CD8-positive, alpha-beta memory T cell (primary cell): ENCODE measurements at regions of chr1 and their contacts with region 1.

Region 1: GRCh38 chr1:109112652-109113285 is 1.1 kb upstream of the ELAPOR1 start:
- DNase-seq: peak; percentile 84 to 94 (median 87)
- H3K4me3 ChIP-seq: peak overlapping the region; percentile 73
- H3K4me3 Mint-ChIP-seq: peak overlapping the region; percentile 87 to 94 (median 89)
- H3K27ac ChIP-seq: peak overlapping the region; percentile 49
- H3K27ac Mint-ChIP-seq: peak overlapping the region; percentile 75 to 99 (median 96)
- H3K4me1 ChIP-seq: peaks cover 27% of the 10 kb centered on the region
- H3K4me1 Mint-ChIP-seq: peaks cover 22 to 30% (median 29%) of the 10 kb centered on the region in 3 donors
- H3K27me3 ChIP-seq: no peaks in the 10 kb centered on the region
- H3K27me3 Mint-ChIP-seq: peaks cover 3 to 13% of the 10 kb centered on the region in 2 donors

Region 2: GRCh38 chr1:108828022-108828961 is 284.5 kb before region 1 on chr1:
- CTCF ChIA-PET with region 1: interaction called, 18 read pairs
- POLR2A ChIA-PET with region 1: no interaction called
- DNase-seq: peak; percentile 48 to 79 (median 63)
- H3K4me3 ChIP-seq: no peak overlapping the region
- H3K4me3 Mint-ChIP-seq: no peak overlapping the region
- H3K27ac ChIP-seq: no peak overlapping the region
- H3K27ac Mint-ChIP-seq: peak overlapping the region in 2 of 8 donors; percentile 12 to 46
- H3K4me1 ChIP-seq: no peaks in the 10 kb centered on the region
- H3K4me1 Mint-ChIP-seq: peaks cover 0 to 5% (median 4%) of the 10 kb centered on the region in 3 donors
- H3K27me3 ChIP-seq: no peaks in the 10 kb centered on the region
- H3K27me3 Mint-ChIP-seq: no peaks in the 10 kb centered on the region

Region 3: DNA sequence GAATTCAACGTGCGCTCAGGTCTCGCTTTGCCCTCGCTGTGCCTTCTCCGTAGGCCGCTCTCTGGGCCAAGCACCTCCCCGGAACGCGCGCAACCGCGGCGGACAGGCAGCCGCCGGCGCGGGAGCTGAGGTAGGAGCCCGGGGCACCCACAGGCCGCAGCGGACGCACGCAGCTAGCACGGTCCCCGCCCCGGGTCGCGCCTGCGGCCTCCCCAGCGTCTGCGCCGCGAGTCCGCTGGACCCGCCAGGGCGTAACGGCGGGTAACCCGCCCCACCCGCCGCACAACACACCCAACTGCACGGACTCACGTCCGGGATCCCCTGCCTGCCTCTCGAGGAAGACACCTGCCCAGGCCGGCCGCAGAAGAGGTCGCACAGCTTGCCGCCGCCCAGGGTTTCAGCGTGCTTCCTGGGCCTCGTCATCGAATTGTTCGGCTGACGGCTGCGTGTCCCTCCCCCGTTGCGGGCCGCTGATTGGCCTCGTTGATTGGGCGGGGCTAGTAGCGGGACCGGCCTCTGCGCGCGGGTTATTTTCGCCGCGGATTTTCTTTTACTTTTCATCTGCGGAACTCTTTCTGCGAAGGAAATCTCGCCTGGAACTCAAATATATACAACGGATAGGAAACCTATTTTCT is 149.6 kb before region 1 on chr1 and contains the start of gene CLCC1:
- CTCF ChIA-PET with region 1: interaction called, 10 read pairs
- POLR2A ChIA-PET with region 1: interaction called, 7 read pairs
- DNase-seq: peak; percentile 89 to 95 (median 92)
- H3K4me3 ChIP-seq: peak within 1 kb of the TSS; percentile 69
- H3K4me3 Mint-ChIP-seq: peak within 1 kb of the TSS; percentile 86 to 95 (median 89)
- H3K27ac ChIP-seq: peak within 1 kb of the TSS; percentile 89
- H3K27ac Mint-ChIP-seq: peak within 1 kb of the TSS; percentile 92 to 97 (median 94)
- H3K4me1 ChIP-seq: peaks cover 25% of the 10 kb centered on the region
- H3K4me1 Mint-ChIP-seq: peaks cover 33 to 49% (median 40%) of the 10 kb centered on the region in 3 donors
- H3K27me3 ChIP-seq: no peaks in the 10 kb centered on the region
- H3K27me3 Mint-ChIP-seq: peaks cover 0 to 3% of the 10 kb centered on the region in 2 donors
- total RNA-seq, gene CLCC1: 15.8 to 20.2 TPM

Region 4: GRCh38 chr1:109041621-109042468 is 70.9 kb before region 1 on chr1 and contains the start of gene WDR47:
- CTCF ChIA-PET with region 1: interaction called, 10 read pairs
- POLR2A ChIA-PET with region 1: interaction called, 3 read pairs
- DNase-seq: peak; percentile 93 to 98 (median 96)
- H3K4me3 ChIP-seq: peak within 1 kb of the TSS; percentile 79
- H3K4me3 Mint-ChIP-seq: peak within 1 kb of the TSS; percentile 89 to 98 (median 92)
- H3K27ac ChIP-seq: peak within 1 kb of the TSS; percentile 87
- H3K27ac Mint-ChIP-seq: peak within 1 kb of the TSS; percentile 79 to 99 (median 92)
- H3K4me1 ChIP-seq: no peaks in the 10 kb centered on the region
- H3K4me1 Mint-ChIP-seq: peaks cover 16 to 24% (median 16%) of the 10 kb centered on the region in 3 donors
- H3K27me3 ChIP-seq: no peaks in the 10 kb centered on the region
- H3K27me3 Mint-ChIP-seq: no peaks in the 10 kb centered on the region
- total RNA-seq, gene WDR47: 14.4 to 15.1 TPM